ENCODE measurements at regions of chr17 and their contacts with region 1.

Region 1: GRCh38 chr17:60599620-60600489 is at the start of gene PPM1D:
- DNase-seq: peak; percentile 100
- CTCF ChIP-seq: no peak

Region 2: GRCh38 chr17:60577147-60577915 is 22.5 kb before region 1 on chr17:
- CTCF ChIA-PET with region 1: interaction called, 69 read pairs
- POLR2A ChIA-PET with region 1: no interaction called
- DNase-seq: peak; percentile 29
- CTCF ChIP-seq: peak; percentile 38

Region 3: GRCh38 chr17:60618854-60619412 is 19.1 kb after region 1 on chr17:
- CTCF ChIA-PET with region 1: interaction called, 24 read pairs
- POLR2A ChIA-PET with region 1: interaction called, 4 read pairs
- DNase-seq: no peak
- CTCF ChIP-seq: no peak